ENCODE measurements at regions of chr4 and their contacts with region 1.

Region 1: DNA sequence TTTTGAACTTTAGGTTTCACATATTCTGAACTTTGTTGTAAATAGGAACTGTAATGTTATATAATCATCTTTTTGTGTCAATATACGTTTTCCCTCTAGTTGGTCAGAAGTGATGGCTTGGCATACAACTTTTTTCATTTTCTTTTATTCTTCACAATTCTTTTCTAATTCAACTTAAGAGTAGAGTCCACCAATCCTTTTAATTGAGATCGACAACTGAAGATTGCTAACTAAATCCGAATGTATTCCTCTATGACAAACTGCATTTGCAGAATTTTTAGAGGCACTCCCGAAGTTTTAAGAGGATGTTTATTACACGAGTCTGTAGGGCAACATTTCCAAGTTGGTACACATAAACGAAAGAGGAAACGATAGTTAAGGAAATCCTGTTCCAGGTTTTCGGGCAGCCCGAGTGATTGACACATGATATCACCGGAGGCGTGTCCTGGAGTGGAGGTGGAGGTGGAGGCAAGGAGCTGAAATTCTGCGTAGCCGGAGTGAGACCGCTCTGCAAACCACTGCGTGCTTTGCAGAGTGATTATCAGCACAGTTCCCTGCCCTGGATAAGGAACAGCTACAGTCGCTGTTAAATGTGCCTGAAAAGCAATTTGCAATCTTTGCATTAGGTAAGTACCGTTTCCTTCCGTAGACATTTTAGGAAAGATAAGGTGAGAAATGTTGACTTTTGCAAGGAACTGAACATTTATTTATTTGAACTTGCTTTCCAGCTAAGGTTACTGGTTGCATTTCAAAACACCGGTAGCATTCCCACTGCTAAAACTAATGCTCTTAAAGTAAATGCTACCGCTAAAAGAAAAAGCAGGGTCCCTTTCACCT is at the start of gene SPRY1:
- DNase-seq: peak; percentile 84 to 93 (median 92)
- ATAC-seq: peak; percentile 86 to 92 (median 90)
- H3K4me3 ChIP-seq: peak within 1 kb of the TSS; percentile 63 to 86 (median 73)
- H3K27ac ChIP-seq: peak within 1 kb of the TSS; percentile 85 to 97 (median 93)
- H3K4me1 ChIP-seq: peaks cover 0 to 29% (median 0%) of the 10 kb centered on the region in 12 donors
- H3K27me3 ChIP-seq: peaks cover 0 to 8% (median 0%) of the 10 kb centered on the region in 9 donors
- CTCF ChIP-seq: no peak
- POLR2A ChIP-seq: peak; percentile 41 to 96
- total RNA-seq, gene SPRY1: 28.0 to 104 (median 39.1) TPM

Region 2: DNA sequence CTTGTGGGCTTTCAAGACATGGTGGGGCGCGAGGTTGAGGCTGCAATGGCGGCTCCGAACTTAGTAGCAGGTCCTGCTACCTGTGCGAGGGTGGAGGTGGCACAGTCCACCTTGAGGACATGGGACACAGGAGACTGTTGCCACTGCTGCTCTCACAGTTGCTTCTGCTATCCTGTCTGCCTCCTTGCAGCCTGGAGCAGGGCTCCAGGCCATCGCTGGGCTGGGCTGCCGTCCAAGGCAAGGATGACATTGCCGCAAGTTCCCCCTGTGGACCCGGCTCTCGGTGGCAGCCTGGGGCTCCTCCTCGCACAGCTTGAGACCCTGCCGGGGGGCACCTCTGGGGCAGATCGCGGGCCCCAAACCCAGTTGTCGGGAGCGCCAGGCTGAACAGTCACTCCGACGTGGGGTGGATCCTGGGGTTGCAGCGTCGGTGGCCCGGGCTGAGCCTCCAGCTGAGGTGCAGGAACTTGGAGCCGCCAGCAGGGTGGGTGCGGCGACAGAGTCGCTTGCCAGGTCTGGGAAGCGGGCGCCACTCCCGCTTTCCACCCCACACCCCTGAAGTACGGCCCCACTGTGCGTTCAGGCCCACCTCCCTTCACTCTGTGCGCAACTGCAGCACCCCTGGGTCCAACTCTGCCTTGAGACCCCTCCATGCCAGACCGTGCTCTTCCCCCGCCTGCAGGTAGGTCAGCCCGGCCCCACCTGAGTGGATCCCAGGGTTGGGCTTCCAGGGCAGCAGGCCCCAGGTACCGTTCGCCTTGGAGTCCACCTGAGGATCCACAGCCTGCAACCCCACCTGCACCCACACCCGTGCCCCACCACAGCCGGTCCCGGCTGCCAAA is 281.4 kb before region 1 on chr4:
- intact Hi-C with region 1: loop called in 5 of 10 experiments (anchors 5 to 10 kb)
- DNase-seq: peak in 2 of 5 donors; percentile 20 to 63
- ATAC-seq: peak in 1 of 4 donors; percentile 18
- H3K4me3 ChIP-seq: no peak overlapping the region
- H3K27ac ChIP-seq: no peak overlapping the region
- H3K4me1 ChIP-seq: peaks cover 0 to 13% (median 2%) of the 10 kb centered on the region in 12 donors
- H3K27me3 ChIP-seq: no peaks in the 10 kb centered on the region
- CTCF ChIP-seq: no peak
- POLR2A ChIP-seq: no peak

Region 3: DNA sequence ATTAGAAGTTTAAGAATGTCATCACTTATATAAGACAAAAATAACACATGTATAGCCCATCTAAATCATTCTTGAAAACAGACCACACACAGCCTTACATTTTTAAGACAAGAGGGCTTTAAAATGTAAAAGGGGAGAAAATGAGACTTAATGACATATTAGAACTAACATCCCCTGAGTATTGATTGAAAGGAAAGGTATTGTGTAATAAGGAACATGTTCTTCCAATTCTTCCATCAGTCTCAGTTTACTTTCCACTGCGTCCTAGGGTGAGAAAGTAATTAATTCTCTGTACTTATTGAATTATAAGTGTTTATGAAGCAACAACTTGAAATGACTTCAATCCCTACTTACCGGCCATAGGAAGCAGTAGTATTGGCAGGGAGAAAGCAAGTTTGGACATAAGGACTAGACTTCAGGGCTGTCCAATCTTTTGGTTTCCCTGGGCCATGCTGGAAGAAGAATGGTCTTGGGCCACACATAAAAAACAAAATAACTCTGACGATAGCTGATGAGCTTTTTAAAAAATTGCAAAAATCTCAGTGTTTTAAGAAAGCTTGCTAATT is 202.6 kb before region 1 on chr4:
- intact Hi-C with region 1: no loop called
- DNase-seq: no peak
- ATAC-seq: no peak
- H3K4me3 ChIP-seq: no peak overlapping the region
- H3K27ac ChIP-seq: no peak overlapping the region
- H3K4me1 ChIP-seq: no peaks in the 10 kb centered on the region
- H3K27me3 ChIP-seq: no peaks in the 10 kb centered on the region
- CTCF ChIP-seq: no peak
- POLR2A ChIP-seq: no peak

Region 4: DNA sequence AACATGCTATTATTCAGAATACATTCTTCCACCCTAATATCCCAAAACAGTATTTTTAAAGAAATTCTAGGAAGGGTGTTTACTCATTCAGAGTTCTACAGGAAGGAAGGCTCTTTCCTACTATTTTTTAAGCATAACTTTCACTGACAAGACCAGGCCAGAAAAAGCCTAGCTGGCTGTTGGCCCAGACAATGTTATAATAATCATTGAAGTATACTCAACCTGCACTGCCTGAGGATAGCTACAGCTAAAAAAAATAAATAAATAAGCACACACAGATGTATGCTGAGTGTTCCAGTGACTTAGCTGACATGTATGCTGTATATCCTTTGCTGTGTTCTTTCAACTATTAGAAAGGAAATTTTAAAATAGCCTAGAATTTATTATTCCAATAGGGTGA is 145.7 kb before region 1 on chr4:
- intact Hi-C with region 1: loop called in 6 of 10 experiments (anchors 2 to 5 kb)
- DNase-seq: peak; percentile 45 to 70 (median 63)
- ATAC-seq: peak; percentile 52 to 83 (median 82)
- H3K4me3 ChIP-seq: no peak overlapping the region
- H3K27ac ChIP-seq: peak overlapping the region in 9 of 12 donors; percentile 21 to 70 (median 44)
- H3K4me1 ChIP-seq: peaks cover 0 to 47% (median 29%) of the 10 kb centered on the region in 12 donors
- H3K27me3 ChIP-seq: no peaks in the 10 kb centered on the region
- CTCF ChIP-seq: no peak
- POLR2A ChIP-seq: no peak

Region 5: DNA sequence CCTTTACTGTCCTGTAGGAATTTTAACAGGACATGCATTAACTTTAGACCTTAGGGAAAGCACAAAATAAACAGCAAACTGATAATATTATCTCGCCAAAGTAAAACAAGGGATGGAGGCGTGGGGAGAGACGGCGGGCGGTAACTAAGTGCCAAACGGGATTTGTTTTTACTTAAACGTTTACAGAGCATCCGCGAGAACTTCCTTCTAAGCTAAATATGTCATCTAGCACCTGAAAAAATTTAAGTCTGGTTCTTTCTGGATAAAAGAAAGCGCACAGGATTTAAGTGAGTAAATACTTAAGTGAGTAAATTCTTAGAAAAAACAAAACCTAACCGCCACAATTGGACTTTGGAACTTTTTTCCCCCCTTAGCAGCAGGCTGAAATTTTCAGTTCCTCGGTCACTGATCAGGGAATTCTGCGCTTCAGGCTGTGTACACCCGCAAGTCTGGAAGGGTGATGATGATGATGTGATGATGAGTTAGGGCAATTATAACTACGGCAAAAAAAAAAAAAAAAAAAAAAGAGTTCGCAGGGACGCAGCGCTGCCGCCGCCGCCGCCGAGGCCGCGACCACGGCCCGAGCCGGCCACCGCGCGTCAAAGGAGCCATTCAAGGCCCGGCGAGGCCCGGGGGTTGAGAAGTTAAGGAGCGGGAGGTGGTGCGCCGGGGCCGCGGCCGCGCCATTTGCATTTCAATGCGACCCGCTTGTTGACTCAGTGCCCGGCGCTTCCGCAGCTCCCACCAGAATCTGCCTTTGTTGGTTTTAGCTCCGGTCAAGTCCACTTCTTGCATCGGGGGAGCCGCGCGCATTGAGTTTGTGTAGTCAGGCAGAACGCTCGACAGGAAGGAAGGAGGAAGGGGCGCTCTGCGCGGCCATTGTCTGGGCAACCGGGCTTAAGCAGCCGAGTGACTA is 108.8 kb after region 1 on chr4:
- intact Hi-C with region 1: loop called in 5 of 10 experiments (anchors 5 to 10 kb)
- DNase-seq: peak; percentile 51 to 73 (median 57)
- ATAC-seq: peak; percentile 38 to 86 (median 75)
- H3K4me3 ChIP-seq: peak overlapping the region; percentile 32 to 90 (median 66)
- H3K27ac ChIP-seq: peak overlapping the region; percentile 45 to 87 (median 74)
- H3K4me1 ChIP-seq: peaks cover 0 to 15% (median 0%) of the 10 kb centered on the region in 12 donors
- H3K27me3 ChIP-seq: peaks cover 0 to 2% (median 0%) of the 10 kb centered on the region in 9 donors
- CTCF ChIP-seq: no peak
- POLR2A ChIP-seq: no peak

Region 6: GRCh38 chr4:123649645-123650391 is 253.3 kb after region 1 on chr4:
- intact Hi-C with region 1: loop called in 8 of 10 experiments (anchors 2 to 10 kb)
- DNase-seq: peak in 3 of 5 donors; percentile 22 to 40 (median 40)
- ATAC-seq: peak; percentile 44 to 78 (median 68)
- H3K4me3 ChIP-seq: peak overlapping the region in 5 of 12 donors; percentile 6 to 28 (median 20)
- H3K27ac ChIP-seq: peak overlapping the region; percentile 3 to 82 (median 56)
- H3K4me1 ChIP-seq: peaks cover 0 to 47% (median 11%) of the 10 kb centered on the region in 12 donors
- H3K27me3 ChIP-seq: no peaks in the 10 kb centered on the region
- CTCF ChIP-seq: no peak
- POLR2A ChIP-seq: no peak

Region 7: DNA sequence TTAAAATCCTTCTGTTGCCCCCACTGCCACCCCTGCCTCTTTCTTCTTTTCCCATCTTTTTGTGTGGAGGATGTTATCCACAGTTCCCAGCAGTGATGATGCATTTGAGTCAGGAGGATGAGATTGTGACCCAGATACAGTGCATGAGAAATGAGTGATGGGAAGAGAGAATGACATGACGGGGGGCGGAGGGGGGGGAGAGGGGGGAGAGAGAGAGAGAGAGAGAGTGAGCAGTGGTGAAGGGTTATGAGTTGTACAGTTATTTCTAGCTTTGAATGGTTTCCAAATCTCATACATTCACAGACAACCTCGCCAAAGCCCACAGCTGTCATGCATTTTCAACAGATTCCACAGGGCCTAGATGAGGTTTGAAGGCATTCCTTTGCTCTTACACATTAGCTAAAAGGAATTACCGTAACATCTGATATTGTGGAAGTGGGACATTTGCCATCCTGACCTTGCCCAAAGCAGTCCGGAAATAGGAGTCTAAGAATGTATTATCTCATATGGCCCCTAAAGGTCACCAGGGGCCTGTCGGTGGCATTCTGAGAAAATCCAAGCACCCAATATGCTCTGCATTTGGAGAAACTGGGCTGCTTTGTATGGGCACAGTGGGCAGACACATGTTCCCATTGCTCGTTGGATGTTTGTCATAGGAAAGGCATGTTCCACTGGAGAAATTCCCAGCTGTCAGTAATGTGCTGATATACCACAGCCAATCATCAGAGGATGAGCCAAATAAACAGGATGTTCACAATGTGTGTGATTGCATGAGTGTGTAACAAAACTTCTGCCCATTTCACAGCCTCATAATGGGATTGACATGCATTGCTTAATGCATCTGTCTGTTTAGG is 435.9 kb after region 1 on chr4:
- intact Hi-C with region 1: loop called in 1 of 10 experiments (anchors 10 kb)
- DNase-seq: peak; percentile 39 to 77 (median 75)
- ATAC-seq: peak; percentile 90 to 93 (median 92)
- H3K4me3 ChIP-seq: peak overlapping the region in 1 of 12 donors; percentile 9
- H3K27ac ChIP-seq: peak overlapping the region; percentile 79 to 99 (median 89)
- H3K4me1 ChIP-seq: peaks cover 0 to 54% (median 33%) of the 10 kb centered on the region in 12 donors
- H3K27me3 ChIP-seq: no peaks in the 10 kb centered on the region
- CTCF ChIP-seq: no peak
- POLR2A ChIP-seq: no peak

Region 8: GRCh38 chr4:124111922-124112321 is 715.4 kb after region 1 on chr4:
- intact Hi-C with region 1: loop called in 8 of 10 experiments (anchors 5 to 10 kb)
- DNase-seq: peak in 1 of 5 donors; percentile 41
- ATAC-seq: peak; percentile 78 to 96 (median 87)
- H3K4me3 ChIP-seq: no peak overlapping the region
- H3K27ac ChIP-seq: peak overlapping the region in 6 of 12 donors; percentile 19 to 54 (median 32)
- H3K4me1 ChIP-seq: peaks cover 0 to 18% (median 6%) of the 10 kb centered on the region in 12 donors
- H3K27me3 ChIP-seq: no peaks in the 10 kb centered on the region
- CTCF ChIP-seq: peak; percentile 54 to 85 (median 78)
- POLR2A ChIP-seq: no peak